Calu3 (cell line): ENCODE measurements at regions of chr16 and their contacts with region 1.

Region 1: DNA sequence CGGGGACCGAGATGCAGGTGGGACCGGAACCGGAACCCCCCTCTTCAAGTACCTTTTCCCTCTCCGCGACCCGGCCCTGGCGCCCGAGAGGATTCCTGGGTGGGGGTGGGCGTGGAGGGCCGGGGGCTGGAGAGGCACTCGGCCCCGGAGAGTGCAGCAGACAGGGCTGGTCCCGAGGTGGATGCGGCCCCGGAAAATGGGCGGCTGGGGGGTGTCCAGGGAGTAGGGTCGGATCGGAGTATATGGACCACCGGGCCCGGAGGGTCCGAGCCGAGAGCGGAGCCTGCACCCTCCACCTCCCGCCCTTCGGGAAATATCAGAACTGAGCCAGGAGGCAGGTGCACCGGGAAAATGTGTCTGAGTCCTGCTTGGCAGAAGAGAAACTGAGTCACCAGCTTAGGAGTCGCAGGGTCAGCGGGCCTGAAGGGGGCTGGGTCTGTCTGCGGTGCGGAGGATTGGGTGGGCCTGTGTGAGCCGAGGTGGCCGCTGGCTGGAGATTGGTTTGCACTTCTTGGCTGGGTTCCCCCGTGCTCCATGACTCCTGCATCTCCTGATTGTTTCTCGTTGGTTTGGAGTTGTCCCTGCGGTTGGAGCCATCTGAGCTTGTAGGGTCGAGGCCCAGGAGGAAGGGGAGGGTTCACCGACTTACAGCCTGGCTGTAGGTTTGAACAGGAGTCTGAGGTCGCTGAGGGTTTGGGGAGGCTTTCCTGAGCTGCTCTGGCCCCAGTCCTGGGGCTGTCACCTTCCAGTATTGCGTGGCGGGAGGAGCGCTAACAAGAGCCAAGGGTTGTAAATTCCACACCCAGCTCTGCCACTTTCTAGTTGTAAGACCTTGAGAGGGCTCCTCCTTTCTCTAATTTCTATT is 518 bp downstream of the SH2B1 start:
- DNase-seq: peak; percentile 19
- H3K4me3 Mint-ChIP-seq: peak overlapping the region; percentile 93
- H3K27ac Mint-ChIP-seq: peak overlapping the region; percentile 89
- H3K4me1 Mint-ChIP-seq: peaks cover 31% of the 10 kb centered on the region
- H3K27me3 Mint-ChIP-seq: no peaks in the 10 kb centered on the region
- CTCF ChIP-seq: no peak

Region 2: GRCh38 chr16:28846080-28846932 is 17.9 kb before region 1 on chr16 and contains the start of gene TUFM:
- CTCF ChIA-PET with region 1: interaction called, 7 read pairs
- intact Hi-C with region 1: loop called (anchors 1 kb)
- DNase-seq: peak; percentile 99
- H3K4me3 Mint-ChIP-seq: peak within 1 kb of the TSS; percentile 100
- H3K27ac Mint-ChIP-seq: peak within 1 kb of the TSS; percentile 99
- H3K4me1 Mint-ChIP-seq: peaks cover 20% of the 10 kb centered on the region
- H3K27me3 Mint-ChIP-seq: no peaks in the 10 kb centered on the region
- CTCF ChIP-seq: peak; percentile 77
- total RNA-seq, gene TUFM: 273 and 286 TPM in 2 replicates

Region 3: GRCh38 chr16:28946681-28947080 is 82.5 kb after region 1 on chr16:
- CTCF ChIA-PET with region 1: interaction called, 5 read pairs
- intact Hi-C with region 1: loop called (anchors 5 kb)
- DNase-seq: no peak
- H3K4me3 Mint-ChIP-seq: no peak overlapping the region
- H3K27ac Mint-ChIP-seq: no peak overlapping the region
- H3K4me1 Mint-ChIP-seq: peaks cover 23% of the 10 kb centered on the region
- H3K27me3 Mint-ChIP-seq: no peaks in the 10 kb centered on the region
- CTCF ChIP-seq: no peak